Naive thymus-derived CD4-positive, alpha-beta T cell (primary cell): ENCODE measurements at regions of chr2 and their contacts with region 1.

Region 1: GRCh38 chr2:190443778-190444481 is 35.8 kb downstream of the MFSD6 start:
- DNase-seq: no peak
- ATAC-seq: no peak
- H3K4me3 ChIP-seq: no peak overlapping the region
- H3K4me3 Mint-ChIP-seq: peak overlapping the region in 7 of 10 donors; percentile 4 to 41 (median 17)
- H3K27ac ChIP-seq: no peak overlapping the region
- H3K27ac Mint-ChIP-seq: peak overlapping the region in 4 of 9 donors; percentile 5 to 90 (median 45)
- H3K4me1 ChIP-seq: peaks cover 5 to 17% of the 10 kb centered on the region in 2 donors
- H3K4me1 Mint-ChIP-seq: peaks cover 34 to 91% (median 88%) of the 10 kb centered on the region in 7 donors
- H3K27me3 ChIP-seq: no peaks in the 10 kb centered on the region
- H3K27me3 Mint-ChIP-seq: no peaks in the 10 kb centered on the region

Region 2: GRCh38 chr2:190170673-190171072 is 273.3 kb before region 1 on chr2:
- CTCF ChIA-PET with region 1: no interaction called
- POLR2A ChIA-PET with region 1: no interaction called
- intact Hi-C with region 1: no loop called
- DNase-seq: no peak
- ATAC-seq: no peak
- H3K4me3 ChIP-seq: no peak overlapping the region
- H3K4me3 Mint-ChIP-seq: no peak overlapping the region
- H3K27ac ChIP-seq: no peak overlapping the region
- H3K27ac Mint-ChIP-seq: no peak overlapping the region
- H3K4me1 ChIP-seq: no peaks in the 10 kb centered on the region
- H3K4me1 Mint-ChIP-seq: no peaks in the 10 kb centered on the region
- H3K27me3 ChIP-seq: no peaks in the 10 kb centered on the region
- H3K27me3 Mint-ChIP-seq: peaks cover 0 to 9% (median 3%) of the 10 kb centered on the region in 5 donors

Region 3: DNA sequence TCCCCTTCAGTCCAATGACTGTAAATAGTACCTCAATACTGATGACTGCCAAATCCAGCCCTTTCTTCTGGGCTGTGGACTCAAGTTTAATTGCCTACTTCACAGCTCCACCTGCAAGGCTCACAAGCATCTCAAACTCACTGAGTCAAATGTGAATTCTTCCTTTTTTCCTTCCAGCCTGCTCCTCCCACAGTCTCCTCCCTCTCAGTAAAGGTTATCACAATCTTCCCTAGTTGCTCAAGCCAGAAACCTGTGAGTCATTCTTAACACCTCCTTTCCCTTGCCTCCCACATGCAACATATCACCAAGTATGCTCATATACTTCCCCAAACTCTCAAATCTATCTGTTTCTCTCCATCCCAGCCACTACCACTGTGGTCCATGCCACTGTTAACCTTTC is 39.4 kb before region 1 on chr2:
- CTCF ChIA-PET with region 1: no interaction called
- POLR2A ChIA-PET with region 1: no interaction called
- intact Hi-C with region 1: no loop called
- DNase-seq: peak in 1 of 9 donors; percentile 37
- ATAC-seq: no peak
- H3K4me3 ChIP-seq: no peak overlapping the region
- H3K4me3 Mint-ChIP-seq: no peak overlapping the region
- H3K27ac ChIP-seq: no peak overlapping the region
- H3K27ac Mint-ChIP-seq: no peak overlapping the region
- H3K4me1 ChIP-seq: peaks cover 7 to 11% of the 10 kb centered on the region in 2 donors
- H3K4me1 Mint-ChIP-seq: peaks cover under 1 to 13% (median 5%) of the 10 kb centered on the region in 7 donors
- H3K27me3 ChIP-seq: no peaks in the 10 kb centered on the region
- H3K27me3 Mint-ChIP-seq: no peaks in the 10 kb centered on the region

Region 4: DNA sequence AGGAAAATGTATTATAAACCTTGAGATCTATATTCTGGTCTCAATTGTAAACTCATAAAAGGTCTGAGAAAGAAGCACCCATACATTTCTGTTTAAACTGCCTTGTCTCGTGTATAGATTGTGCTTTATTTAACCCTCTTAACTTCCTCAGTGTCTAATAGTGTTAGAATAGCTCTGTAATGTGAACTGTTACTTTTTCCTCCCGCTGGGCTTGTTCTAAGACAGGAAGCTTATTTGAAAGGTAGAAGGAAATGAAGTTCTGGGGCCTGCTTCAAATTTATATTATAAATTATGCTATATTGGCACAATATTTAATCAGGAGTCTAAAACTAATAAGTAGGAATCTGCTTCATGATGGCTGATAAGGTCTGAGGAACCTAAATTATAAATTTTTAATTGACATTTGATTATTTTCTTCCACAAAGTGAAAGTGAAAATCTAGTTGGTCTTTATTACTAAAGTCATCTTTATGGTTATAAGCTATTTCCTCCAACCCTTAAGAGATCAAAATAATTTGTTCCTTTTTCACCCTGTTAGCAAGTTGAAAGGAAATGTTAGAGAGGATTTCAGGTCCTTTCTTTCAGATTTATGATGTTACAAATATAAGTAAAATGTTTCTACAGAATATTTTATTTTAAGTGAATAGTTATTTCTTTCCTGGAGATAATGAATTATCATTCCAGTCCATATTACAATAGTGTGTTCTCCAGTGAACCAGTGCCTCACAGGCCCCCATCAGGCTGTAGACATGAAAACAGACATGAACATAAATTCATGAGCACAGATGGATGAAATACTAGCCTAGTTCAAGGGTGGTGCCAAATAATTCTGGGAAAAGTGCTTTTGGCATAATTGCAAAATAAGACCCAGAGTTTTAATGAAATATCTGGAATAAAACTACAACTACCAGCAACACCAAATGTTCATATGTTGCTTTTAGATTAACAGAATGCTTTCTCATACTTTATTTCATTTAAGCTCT is 27.8 kb before region 1 on chr2:
- CTCF ChIA-PET with region 1: interaction called, 3 read pairs
- POLR2A ChIA-PET with region 1: no interaction called
- intact Hi-C with region 1: loop called in 1 of 2 experiments (anchors 2 kb)
- DNase-seq: peak in 3 of 9 donors; percentile 30 to 32 (median 31)
- ATAC-seq: peak; percentile 60
- H3K4me3 ChIP-seq: no peak overlapping the region
- H3K4me3 Mint-ChIP-seq: peak overlapping the region in 9 of 10 donors; percentile 44 to 78 (median 64)
- H3K27ac ChIP-seq: peak overlapping the region; percentile 74
- H3K27ac Mint-ChIP-seq: peak overlapping the region; percentile 61 to 93 (median 87)
- H3K4me1 ChIP-seq: peaks cover 24 to 50% of the 10 kb centered on the region in 2 donors
- H3K4me1 Mint-ChIP-seq: peaks cover 51 to 97% (median 91%) of the 10 kb centered on the region in 7 donors
- H3K27me3 ChIP-seq: no peaks in the 10 kb centered on the region
- H3K27me3 Mint-ChIP-seq: no peaks in the 10 kb centered on the region

Region 5: DNA sequence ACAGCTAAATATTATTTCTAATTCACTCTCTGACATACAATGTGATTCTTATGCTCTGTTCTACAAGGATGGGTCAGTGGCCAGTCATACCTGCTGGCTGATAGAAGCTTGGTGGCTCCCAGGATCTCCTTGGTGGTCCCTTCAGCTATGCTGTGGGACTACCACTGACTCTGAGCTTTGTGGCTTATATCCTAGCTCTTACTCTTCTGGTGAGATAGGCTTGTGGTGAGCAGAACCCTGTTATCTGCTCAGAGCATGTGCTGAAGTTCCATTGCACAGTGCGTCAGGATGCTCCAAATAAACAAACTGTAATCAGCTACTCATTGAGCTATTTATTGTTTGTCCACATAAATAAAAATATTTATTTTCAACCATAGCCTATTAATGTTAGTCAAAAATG is 16.0 kb after region 1 on chr2:
- CTCF ChIA-PET with region 1: interaction called, 3 read pairs
- POLR2A ChIA-PET with region 1: interaction called, 3 read pairs
- intact Hi-C with region 1: loop called in 1 of 2 experiments (anchors 2 kb)
- DNase-seq: no peak
- ATAC-seq: no peak
- H3K4me3 ChIP-seq: no peak overlapping the region
- H3K4me3 Mint-ChIP-seq: no peak overlapping the region
- H3K27ac ChIP-seq: no peak overlapping the region
- H3K27ac Mint-ChIP-seq: peak overlapping the region in 2 of 9 donors; percentile 2 to 5
- H3K4me1 ChIP-seq: peaks cover 0 to 17% of the 10 kb centered on the region in 2 donors
- H3K4me1 Mint-ChIP-seq: peaks cover 9 to 85% (median 76%) of the 10 kb centered on the region in 7 donors
- H3K27me3 ChIP-seq: no peaks in the 10 kb centered on the region
- H3K27me3 Mint-ChIP-seq: no peaks in the 10 kb centered on the region

Region 6: GRCh38 chr2:190482451-190482850 is 38.5 kb after region 1 on chr2:
- CTCF ChIA-PET with region 1: no interaction called
- POLR2A ChIA-PET with region 1: no interaction called
- intact Hi-C with region 1: loop called in 1 of 2 experiments (anchors 5 kb)
- DNase-seq: no peak
- ATAC-seq: no peak
- H3K4me3 ChIP-seq: no peak overlapping the region
- H3K4me3 Mint-ChIP-seq: no peak overlapping the region
- H3K27ac ChIP-seq: no peak overlapping the region
- H3K27ac Mint-ChIP-seq: peak overlapping the region in 1 of 9 donors; percentile 46
- H3K4me1 ChIP-seq: no peaks in the 10 kb centered on the region
- H3K4me1 Mint-ChIP-seq: peaks cover 0 to 60% (median 46%) of the 10 kb centered on the region in 7 donors
- H3K27me3 ChIP-seq: no peaks in the 10 kb centered on the region
- H3K27me3 Mint-ChIP-seq: no peaks in the 10 kb centered on the region

Region 7: GRCh38 chr2:190812506-190813294 is 368.8 kb after region 1 on chr2:
- CTCF ChIA-PET with region 1: no interaction called
- POLR2A ChIA-PET with region 1: no interaction called
- intact Hi-C with region 1: no loop called
- DNase-seq: no peak
- ATAC-seq: no peak
- H3K4me3 ChIP-seq: no peak overlapping the region
- H3K4me3 Mint-ChIP-seq: no peak overlapping the region
- H3K27ac ChIP-seq: no peak overlapping the region
- H3K27ac Mint-ChIP-seq: no peak overlapping the region
- H3K4me1 ChIP-seq: no peaks in the 10 kb centered on the region
- H3K4me1 Mint-ChIP-seq: peaks cover 0 to 8% (median 0%) of the 10 kb centered on the region in 7 donors
- H3K27me3 ChIP-seq: no peaks in the 10 kb centered on the region
- H3K27me3 Mint-ChIP-seq: peaks cover 0 to 6% (median 0%) of the 10 kb centered on the region in 5 donors